ENCODE measurements at regions of chr11 and their contacts with region 1.

Region 1: DNA sequence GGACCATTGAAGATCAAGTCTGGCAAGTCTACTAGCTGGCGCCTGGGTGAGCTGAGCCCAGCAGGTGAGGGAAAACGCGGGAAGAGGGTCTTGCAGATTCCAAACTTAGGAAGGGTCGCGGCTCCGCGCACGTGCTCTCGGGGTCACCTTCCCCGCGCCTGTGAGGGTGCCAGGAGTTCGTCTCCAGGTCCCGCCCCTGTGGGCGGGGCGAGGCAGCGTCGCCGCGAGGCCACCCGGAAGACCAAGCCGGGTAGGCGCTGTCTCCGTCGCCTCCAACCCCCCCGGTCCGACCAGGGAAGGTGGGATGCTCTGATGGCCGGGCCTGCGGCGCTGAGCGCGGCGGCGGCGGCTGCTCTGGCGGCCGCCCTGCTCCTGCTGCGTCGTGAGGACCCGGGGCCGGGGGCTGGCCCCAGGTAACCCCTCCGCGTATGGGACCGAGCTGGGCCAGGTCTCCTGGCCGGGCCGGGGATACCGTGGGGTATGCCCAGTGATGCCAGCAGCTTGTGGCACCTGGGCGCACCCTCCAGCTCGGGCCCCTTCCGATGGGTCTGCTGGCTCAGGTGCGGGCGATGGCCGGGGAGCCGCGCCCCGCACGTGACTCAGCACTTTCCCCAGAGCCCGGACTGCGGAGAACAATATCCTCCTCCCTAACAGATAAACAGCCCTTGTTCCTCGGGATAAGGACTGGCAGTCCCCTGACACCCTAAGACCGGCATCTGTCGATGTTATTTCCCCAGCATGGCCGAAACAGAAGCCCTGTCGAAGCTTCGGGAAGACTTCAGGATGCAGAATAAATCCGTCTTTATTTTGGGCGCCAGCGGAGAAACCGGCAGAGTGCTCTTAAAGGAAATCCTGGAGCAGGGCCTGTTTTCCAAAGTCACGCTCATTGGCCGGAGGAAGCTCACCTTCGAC is at the start of gene HTATIP2:
- DNase-seq: peak; percentile 52 to 88 (median 74)
- ATAC-seq: peak; percentile 86
- H3K4me3 ChIP-seq: peak within 1 kb of the TSS; percentile 79 to 82
- H3K4me3 Mint-ChIP-seq: peak within 1 kb of the TSS; percentile 92
- H3K27ac ChIP-seq: peak within 1 kb of the TSS; percentile 68 to 69
- H3K27ac Mint-ChIP-seq: peak within 1 kb of the TSS; percentile 94
- H3K4me1 ChIP-seq: peaks cover 33% of the 10 kb centered on the region
- H3K4me1 Mint-ChIP-seq: peaks cover 66% of the 10 kb centered on the region
- H3K27me3 ChIP-seq: no peaks in the 10 kb centered on the region
- H3K27me3 Mint-ChIP-seq: no peaks in the 10 kb centered on the region
- CTCF ChIP-seq: no peak
- total RNA-seq, gene HTATIP2: 6.6 to 7.5 TPM

Region 2: DNA sequence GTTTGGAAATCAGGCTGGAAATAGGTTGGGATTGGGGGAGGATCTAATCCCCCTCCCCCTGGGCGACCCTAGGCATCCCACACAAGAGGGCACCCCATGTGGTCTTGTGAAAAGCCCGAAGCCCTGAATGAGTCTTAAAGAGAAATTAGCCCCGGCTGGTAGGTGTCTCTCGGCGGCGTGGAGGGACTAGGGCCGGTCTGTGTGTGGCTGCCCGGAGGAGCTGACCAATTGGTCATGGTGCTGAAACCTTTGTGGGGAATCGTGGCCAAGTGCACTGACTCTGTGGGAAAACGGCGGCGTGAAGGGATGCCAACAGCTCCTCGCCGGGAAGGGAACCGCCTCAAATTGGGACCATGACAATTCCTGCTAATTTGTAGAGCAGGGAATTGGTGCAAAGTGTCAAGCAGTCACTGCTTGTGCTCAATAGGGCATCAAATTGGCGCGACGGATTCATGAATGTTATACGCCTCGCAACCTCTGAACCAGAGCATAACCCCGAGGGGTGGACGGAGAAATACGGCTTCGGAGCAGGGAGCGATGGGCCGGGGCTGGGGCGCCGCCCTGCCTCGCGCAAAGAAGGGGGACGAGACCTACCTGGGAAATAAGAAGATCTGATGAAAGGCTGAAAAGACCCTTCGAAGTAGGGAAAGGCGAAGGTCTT is 205.0 kb before region 1 on chr11:
- CTCF ChIA-PET with region 1: no interaction called
- POLR2A ChIA-PET with region 1: no interaction called
- intact Hi-C with region 1: loop called in 1 of 2 experiments (anchors 10 kb)
- DNase-seq: peak in 1 of 9 experiments; percentile 11
- ATAC-seq: no peak
- H3K4me3 ChIP-seq: no peak overlapping the region
- H3K4me3 Mint-ChIP-seq: no peak overlapping the region
- H3K27ac ChIP-seq: no peak overlapping the region
- H3K27ac Mint-ChIP-seq: no peak overlapping the region
- H3K4me1 ChIP-seq: peaks cover 19% of the 10 kb centered on the region
- H3K4me1 Mint-ChIP-seq: peaks cover 34% of the 10 kb centered on the region
- H3K27me3 ChIP-seq: peaks cover 55 to 56% of the 10 kb centered on the region in 2 experiments
- H3K27me3 Mint-ChIP-seq: peaks cover 70% of the 10 kb centered on the region
- CTCF ChIP-seq: no peak

Measured in CD8-positive, alpha-beta T cell (primary cell).